WTC11 (cell line): ENCODE measurements at regions of chr12 and their contacts with region 1.

Region 1: DNA sequence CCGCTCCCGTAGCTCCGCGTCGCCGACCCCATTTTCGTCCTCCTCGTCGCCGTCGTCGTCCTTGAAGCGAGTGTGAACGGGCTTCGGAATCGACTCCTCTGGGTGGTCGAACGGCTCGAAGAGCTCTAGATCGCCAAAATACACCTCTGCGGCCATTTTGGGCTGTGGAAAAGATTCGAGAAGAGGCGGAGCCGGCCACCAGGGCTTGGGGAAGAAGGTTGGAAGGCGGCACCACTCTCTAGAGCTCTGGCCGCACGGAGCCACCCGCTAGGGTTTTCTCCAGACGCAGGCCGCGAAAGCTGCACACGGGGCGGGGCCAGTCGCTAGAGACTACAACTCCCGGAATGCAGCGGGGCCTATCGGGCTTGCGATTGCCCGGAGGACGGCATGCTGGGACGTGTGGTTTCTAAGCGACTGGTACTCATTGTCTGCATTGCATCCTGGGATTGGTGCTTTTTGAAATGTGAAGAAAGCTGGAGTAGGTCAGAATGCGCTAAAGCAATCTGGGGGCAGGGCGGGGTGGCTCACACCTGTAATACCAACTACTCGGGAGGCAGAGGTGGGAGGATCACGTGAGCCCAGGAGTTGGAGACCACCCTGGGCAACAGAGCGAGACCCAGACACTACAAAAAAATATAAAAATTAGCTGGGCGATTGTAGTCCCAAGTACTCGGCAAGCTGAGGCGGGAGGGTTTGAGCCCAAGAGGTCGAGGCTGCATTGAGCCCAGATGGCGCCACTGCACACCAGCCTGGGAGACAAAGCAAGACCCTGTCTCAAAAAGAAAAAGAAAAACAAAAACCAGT is at the start of gene ZCCHC8:
- DNase-seq: peak; percentile 98
- ATAC-seq: peak; percentile 94
- H3K4me3 Mint-ChIP-seq: peak within 1 kb of the TSS; percentile 88
- H3K27ac Mint-ChIP-seq: peak within 1 kb of the TSS; percentile 99
- H3K4me1 Mint-ChIP-seq: peaks cover 20% of the 10 kb centered on the region
- H3K27me3 Mint-ChIP-seq: no peaks in the 10 kb centered on the region
- CTCF ChIP-seq: no peak
- total RNA-seq, gene ZCCHC8: 24.3 to 28.4 TPM (median 25.7 TPM) in 3 replicates

Region 2: DNA sequence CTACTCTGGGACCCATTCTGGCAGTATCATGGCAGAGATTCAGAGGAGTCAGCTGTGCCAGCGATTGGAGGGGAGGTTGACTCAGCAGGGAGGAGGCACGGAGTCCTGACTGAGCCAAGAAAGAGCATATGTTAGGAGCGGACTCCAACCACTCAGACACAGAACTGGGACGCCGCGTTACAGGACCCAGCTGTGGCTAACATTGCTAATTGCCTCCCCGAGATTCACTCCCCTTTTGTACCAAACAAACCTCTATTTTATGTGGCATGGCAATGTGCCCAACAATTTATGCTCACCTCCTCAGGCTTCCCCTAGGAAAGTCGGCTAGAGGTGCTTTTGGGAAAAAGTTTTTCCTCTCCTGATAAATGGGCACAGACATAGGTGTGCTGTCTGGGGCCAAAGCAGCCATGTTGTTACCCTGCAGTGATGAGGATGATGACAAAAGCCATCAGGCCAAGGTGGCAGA is 63.2 kb before region 1 on chr12:
- CTCF ChIA-PET with region 1: no interaction called
- POLR2A ChIA-PET with region 1: no interaction called
- DNase-seq: no peak
- ATAC-seq: no peak
- H3K4me3 Mint-ChIP-seq: no peak overlapping the region
- H3K27ac Mint-ChIP-seq: no peak overlapping the region
- H3K4me1 Mint-ChIP-seq: no peaks in the 10 kb centered on the region
- H3K27me3 Mint-ChIP-seq: no peaks in the 10 kb centered on the region
- CTCF ChIP-seq: no peak

Region 3: DNA sequence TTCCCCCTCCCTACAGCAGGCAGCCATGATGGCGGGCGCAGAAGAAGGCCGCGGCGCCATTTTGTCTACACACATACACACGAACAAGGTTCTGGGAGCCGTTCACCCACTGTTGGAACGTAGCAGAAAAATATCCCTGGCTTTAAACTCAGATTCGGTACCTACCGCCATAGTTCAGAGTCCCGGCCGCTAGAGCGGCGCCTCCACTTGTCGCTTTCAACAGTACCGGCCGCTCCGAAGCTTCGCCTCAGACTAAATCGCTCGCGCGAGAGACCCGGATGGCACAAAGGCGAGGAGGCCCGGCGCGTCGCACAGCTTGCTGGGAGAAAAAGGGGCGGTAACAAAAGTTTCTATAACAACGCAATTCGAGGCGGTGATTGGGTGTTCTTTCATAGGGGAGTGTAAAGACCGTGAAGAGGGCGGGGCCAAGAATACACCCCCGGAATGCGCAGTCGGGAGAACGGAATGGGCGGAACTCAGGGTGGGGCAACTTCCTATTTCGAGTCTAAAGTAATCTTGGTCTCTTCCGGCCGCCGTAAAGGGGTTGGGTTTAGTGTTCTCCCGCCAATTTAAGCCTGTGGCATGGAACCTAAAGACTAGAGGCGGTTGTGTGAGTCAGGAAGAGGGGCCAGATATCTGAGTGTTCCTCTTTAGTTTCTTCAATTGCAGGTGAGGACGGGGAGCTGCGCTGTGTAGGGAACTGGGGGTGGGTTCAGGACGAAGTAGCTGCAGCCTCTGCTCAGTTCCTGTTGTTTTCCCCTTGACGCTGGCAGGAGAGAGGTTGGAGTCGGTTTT is 26.0 kb after region 1 on chr12 and contains the starts of genes KNTC1 and RSRC2:
- CTCF ChIA-PET with region 1: no interaction called
- POLR2A ChIA-PET with region 1: interaction called, 46 read pairs
- DNase-seq: peak; percentile 98
- ATAC-seq: peak; percentile 98
- H3K4me3 Mint-ChIP-seq: no peak within 1 kb of the TSS
- H3K27ac Mint-ChIP-seq: no peak within 1 kb of the TSS; the same call in 1 of the 2 replicates
- H3K4me1 Mint-ChIP-seq: peaks cover 18% of the 10 kb centered on the region
- H3K27me3 Mint-ChIP-seq: no peaks in the 10 kb centered on the region
- CTCF ChIP-seq: no peak
- total RNA-seq, gene KNTC1: 78.3 to 85.1 TPM (median 83.4 TPM) in 3 replicates
- total RNA-seq, gene RSRC2: 78.3 to 93.1 TPM (median 82.4 TPM) in 3 replicates